ENCODE measurements at regions of chr13 and their contacts with region 1.

Region 1: GRCh38 chr13:44484562-44485138 is 91.5 kb downstream of the TSC22D1 start:
- DNase-seq: no peak
- ATAC-seq: peak; percentile 54
- H3K4me3 Mint-ChIP-seq: peak overlapping the region; percentile 58
- H3K27ac Mint-ChIP-seq: peak overlapping the region; percentile 30
- H3K4me1 Mint-ChIP-seq: peaks cover 21% of the 10 kb centered on the region
- H3K27me3 Mint-ChIP-seq: no peaks in the 10 kb centered on the region
- CTCF ChIP-seq: no peak

Region 2: DNA sequence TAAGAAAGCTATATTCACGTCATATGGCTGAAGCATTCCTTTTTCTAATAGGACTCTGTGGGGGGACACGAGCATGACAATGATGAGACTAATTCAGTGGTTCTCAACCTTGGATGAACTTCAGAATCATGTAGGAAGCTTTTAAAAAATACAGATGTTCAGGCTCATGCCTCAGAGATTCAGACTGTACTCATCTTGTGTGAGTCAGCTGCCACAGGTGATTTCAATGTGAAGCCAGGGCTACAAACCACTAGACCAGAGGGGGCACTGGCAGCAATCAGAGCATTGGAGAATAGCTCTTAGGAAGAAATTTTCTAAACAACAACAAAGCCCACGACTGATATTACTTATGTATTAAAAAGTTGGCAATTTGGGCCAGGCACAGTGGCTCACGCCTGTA is 19.3 kb before region 1 on chr13:
- CTCF ChIA-PET with region 1: no interaction called
- POLR2A ChIA-PET with region 1: no interaction called
- intact Hi-C with region 1: no loop called
- DNase-seq: no peak
- ATAC-seq: no peak
- H3K4me3 Mint-ChIP-seq: no peak overlapping the region
- H3K27ac Mint-ChIP-seq: no peak overlapping the region
- H3K4me1 Mint-ChIP-seq: no peaks in the 10 kb centered on the region
- H3K27me3 Mint-ChIP-seq: no peaks in the 10 kb centered on the region
- CTCF ChIP-seq: no peak

Region 3: GRCh38 chr13:44648392-44649103 is 163.9 kb after region 1 on chr13:
- CTCF ChIA-PET with region 1: interaction called, 4 read pairs
- POLR2A ChIA-PET with region 1: no interaction called
- intact Hi-C with region 1: loop called (anchors 1 kb)
- DNase-seq: no peak
- ATAC-seq: no peak
- H3K4me3 Mint-ChIP-seq: no peak overlapping the region
- H3K27ac Mint-ChIP-seq: no peak overlapping the region
- H3K4me1 Mint-ChIP-seq: no peaks in the 10 kb centered on the region
- H3K27me3 Mint-ChIP-seq: peaks cover 14% of the 10 kb centered on the region
- CTCF ChIP-seq: no peak

Region 4: GRCh38 chr13:44879463-44880058 is 394.9 kb after region 1 on chr13:
- CTCF ChIA-PET with region 1: interaction called, 3 read pairs
- POLR2A ChIA-PET with region 1: no interaction called
- intact Hi-C with region 1: loop called (anchors 1 kb)
- DNase-seq: no peak
- ATAC-seq: no peak
- H3K4me3 Mint-ChIP-seq: no peak overlapping the region
- H3K27ac Mint-ChIP-seq: no peak overlapping the region
- H3K4me1 Mint-ChIP-seq: no peaks in the 10 kb centered on the region
- H3K27me3 Mint-ChIP-seq: peaks cover 2% of the 10 kb centered on the region
- CTCF ChIP-seq: no peak

Region 5: GRCh38 chr13:44969551-44970484 is 485.2 kb after region 1 on chr13:
- CTCF ChIA-PET with region 1: interaction called, 43 read pairs
- POLR2A ChIA-PET with region 1: interaction called, 4 read pairs
- intact Hi-C with region 1: loop called (anchors 1 kb)
- DNase-seq: no peak
- ATAC-seq: no peak
- H3K4me3 Mint-ChIP-seq: no peak overlapping the region
- H3K27ac Mint-ChIP-seq: no peak overlapping the region
- H3K4me1 Mint-ChIP-seq: no peaks in the 10 kb centered on the region
- H3K27me3 Mint-ChIP-seq: no peaks in the 10 kb centered on the region
- CTCF ChIP-seq: no peak

Region 6: GRCh38 chr13:45119991-45120864 is 635.6 kb after region 1 on chr13 and contains the start of gene GTF2F2:
- CTCF ChIA-PET with region 1: no interaction called
- POLR2A ChIA-PET with region 1: no interaction called
- intact Hi-C with region 1: loop called (anchors 1 kb)
- DNase-seq: peak; percentile 90
- ATAC-seq: peak; percentile 82
- H3K4me3 Mint-ChIP-seq: no peak within 1 kb of the TSS
- H3K27ac Mint-ChIP-seq: no peak within 1 kb of the TSS
- H3K4me1 Mint-ChIP-seq: peaks cover 9% of the 10 kb centered on the region
- H3K27me3 Mint-ChIP-seq: no peaks in the 10 kb centered on the region
- CTCF ChIP-seq: no peak
- total RNA-seq, gene GTF2F2: 19.4 and 19.8 TPM in 2 replicates

Region 7: DNA sequence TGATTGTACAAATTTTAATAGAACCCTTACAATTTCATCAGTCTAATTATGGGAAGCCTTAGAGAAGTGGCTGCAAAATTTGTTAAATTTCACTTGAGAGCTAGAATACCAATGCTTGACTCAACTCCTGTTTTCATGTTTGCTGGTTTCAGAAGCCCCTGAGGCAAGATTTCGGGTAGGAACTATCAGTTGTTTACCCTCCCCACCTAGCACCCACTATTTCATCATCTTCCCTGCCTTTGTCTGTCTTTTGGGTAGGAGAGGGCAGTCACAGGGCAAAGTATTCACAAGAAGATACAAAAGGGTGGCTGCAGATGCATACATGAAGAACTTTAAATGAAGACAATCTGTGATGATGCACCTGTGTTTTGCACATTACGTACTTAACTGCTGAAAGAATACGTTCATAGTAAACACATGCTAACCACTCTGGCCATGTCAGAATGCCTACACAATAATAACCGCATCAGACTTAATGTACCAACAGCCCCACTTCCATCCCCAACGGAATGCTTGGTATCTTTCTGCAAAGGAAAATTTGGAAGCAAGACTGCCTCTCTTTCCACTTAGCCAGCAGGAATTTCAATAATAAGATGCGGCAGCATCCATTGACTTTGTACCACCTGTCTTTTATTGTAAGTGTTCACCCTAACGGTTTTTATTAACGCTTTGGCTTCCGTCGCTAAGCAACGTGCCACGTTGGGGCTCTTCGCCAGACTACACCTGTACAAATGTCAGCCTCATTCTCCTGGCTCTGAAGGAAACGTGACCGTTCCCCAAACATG is 825.9 kb after region 1 on chr13:
- CTCF ChIA-PET with region 1: interaction called, 5 read pairs
- POLR2A ChIA-PET with region 1: no interaction called
- intact Hi-C with region 1: loop called (anchors 1 kb)
- DNase-seq: no peak
- ATAC-seq: no peak
- H3K4me3 Mint-ChIP-seq: peak overlapping the region; percentile 83
- H3K27ac Mint-ChIP-seq: no peak overlapping the region
- H3K4me1 Mint-ChIP-seq: peaks cover 18% of the 10 kb centered on the region
- H3K27me3 Mint-ChIP-seq: peaks cover 7% of the 10 kb centered on the region
- CTCF ChIP-seq: no peak

Measured in activated B cell treated with CpG ODN at 0.5 μM for 24 hours (primary cell).